ENCODE measurements at regions of chr2 and their contacts with region 1.

Region 1: GRCh38 chr2:234881413-234882241 is 70.2 kb upstream of the SH3BP4 start:
- DNase-seq: peak; percentile 88 to 92
- H3K4me3 ChIP-seq: peak overlapping the region; percentile 41; the same call in 1 of the 2 replicates
- H3K27ac ChIP-seq: peak overlapping the region; percentile 82
- H3K4me1 ChIP-seq: peaks cover 47% of the 10 kb centered on the region
- H3K27me3 ChIP-seq: no peaks in the 10 kb centered on the region
- CTCF ChIP-seq: peak; percentile 97

Region 2: DNA sequence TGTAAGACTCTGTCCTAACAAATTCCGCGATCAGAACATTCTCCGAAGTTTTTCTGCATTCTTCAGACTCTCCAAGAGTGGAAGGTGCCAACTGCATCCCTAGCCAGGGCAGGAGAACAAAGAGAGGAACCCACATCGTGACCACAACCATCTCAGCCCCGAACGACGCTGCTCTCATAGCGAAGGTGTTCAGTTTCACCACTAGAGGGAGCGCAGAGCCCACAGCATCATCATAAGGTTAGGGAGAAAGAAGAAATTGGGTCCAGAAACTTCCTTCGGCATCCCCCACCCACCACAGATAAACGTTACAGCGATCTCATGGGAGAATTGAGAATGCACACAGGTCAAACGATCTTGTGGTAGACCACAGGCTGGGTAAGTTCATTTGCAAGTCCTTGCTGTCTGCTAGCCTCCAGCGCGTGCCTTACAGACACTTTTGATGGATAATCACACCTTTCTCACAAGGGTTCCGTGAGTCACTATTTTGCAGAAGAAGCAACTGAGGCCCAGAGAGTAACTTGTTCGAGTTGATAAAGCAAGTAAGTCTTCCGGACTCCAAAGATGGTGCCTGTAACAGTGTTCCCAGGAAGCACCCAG is 331.0 kb before region 1 on chr2:
- CTCF ChIA-PET with region 1: interaction called, 4 read pairs
- POLR2A ChIA-PET with region 1: no interaction called
- intact Hi-C with region 1: loop called (anchors 1 kb)
- DNase-seq: peak; percentile 74 to 85
- H3K4me3 ChIP-seq: no peak overlapping the region
- H3K27ac ChIP-seq: no peak overlapping the region
- H3K4me1 ChIP-seq: peaks cover 11% of the 10 kb centered on the region
- H3K27me3 ChIP-seq: no peaks in the 10 kb centered on the region
- CTCF ChIP-seq: peak; percentile 99

Region 3: DNA sequence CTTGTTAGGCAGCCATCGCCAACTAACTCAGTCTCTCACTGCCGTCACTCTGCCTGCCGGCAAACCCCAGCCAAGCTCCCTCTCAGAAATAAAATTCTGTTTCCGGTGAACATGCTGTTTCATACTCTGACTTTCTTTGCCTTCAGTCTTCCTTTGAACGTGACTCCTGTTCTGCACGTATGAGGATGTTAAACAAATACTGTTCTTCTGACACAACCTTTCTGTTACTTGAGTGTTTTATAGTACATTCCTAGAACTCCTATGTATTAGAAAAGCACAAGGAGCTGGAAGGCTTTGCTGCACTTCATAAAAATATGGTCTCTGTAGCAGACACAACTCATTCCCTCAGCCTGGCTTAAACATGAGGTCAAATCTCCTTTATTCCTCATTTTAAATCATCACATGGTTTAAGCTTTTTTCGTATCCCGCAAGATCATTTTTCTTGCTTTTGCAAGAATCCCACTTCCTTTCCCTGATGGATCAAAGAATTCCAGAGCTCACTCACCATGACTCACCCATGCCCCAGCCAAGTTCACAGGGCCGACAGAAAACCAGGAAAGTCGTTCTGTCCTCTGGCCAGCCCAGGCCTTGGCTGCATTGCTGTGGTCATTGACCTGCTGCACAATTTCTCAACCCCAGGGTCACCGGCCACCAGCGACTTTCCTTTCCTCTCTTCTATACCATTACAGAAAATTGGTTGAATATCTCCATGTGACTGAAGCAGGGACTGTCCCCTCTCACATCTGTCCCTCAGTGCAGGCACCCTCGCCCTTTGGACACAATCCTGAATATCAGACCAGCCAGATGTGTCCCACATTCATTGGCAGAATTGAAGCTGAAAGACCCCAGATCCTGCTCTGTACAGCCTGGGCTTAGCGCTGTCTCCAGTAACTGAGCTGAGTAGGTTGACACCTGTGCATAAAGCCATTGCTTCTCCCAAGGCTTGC is 201.6 kb before region 1 on chr2:
- CTCF ChIA-PET with region 1: no interaction called
- POLR2A ChIA-PET with region 1: no interaction called
- intact Hi-C with region 1: loop called (anchors 5 kb)
- DNase-seq: peak; percentile 86 to 96
- H3K4me3 ChIP-seq: no peak overlapping the region
- H3K27ac ChIP-seq: peak overlapping the region; percentile 90
- H3K4me1 ChIP-seq: peaks cover 75% of the 10 kb centered on the region
- H3K27me3 ChIP-seq: no peaks in the 10 kb centered on the region
- CTCF ChIP-seq: no peak

Region 4: DNA sequence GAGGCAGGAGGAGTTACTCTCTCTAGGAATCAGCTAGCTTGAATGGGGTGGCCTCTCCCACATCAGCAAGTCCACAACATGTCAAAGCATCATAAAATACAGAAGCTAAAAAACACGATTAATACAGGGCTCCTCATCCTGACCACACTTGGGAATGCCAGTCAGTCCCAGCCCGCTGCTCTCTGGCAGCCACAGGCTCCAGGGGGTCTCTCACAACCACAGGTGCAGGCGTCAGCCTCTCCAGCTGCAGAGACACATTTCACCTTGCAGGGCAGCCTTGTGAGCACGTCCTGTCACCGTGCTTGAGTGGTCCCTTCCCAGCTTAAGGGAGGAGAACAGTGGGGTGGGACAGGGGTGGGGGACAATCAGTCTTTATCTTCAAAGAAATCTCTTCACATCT is 67.3 kb before region 1 on chr2:
- CTCF ChIA-PET with region 1: no interaction called
- POLR2A ChIA-PET with region 1: no interaction called
- intact Hi-C with region 1: no loop called
- DNase-seq: peak in 1 of 2 experiments; percentile 26
- H3K4me3 ChIP-seq: no peak overlapping the region
- H3K27ac ChIP-seq: no peak overlapping the region
- H3K4me1 ChIP-seq: no peaks in the 10 kb centered on the region
- H3K27me3 ChIP-seq: no peaks in the 10 kb centered on the region
- CTCF ChIP-seq: no peak

Region 5: DNA sequence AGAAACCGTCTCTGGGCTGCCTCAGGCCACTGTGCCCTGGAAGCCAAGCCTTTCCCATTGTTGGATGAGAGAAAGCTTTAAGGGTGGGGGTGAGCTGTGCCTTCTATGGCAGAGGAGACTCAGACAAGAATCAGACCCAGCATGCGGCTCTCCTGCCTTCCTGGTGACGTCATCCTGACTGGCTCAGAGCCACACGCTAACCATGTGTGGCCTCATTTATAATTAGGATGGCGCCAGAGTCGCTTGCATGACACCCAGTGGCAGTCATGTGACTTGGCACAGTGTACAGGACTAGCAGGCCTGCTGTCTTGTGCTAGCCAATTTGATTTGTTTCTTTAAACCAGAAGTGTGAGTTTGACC is 169.3 kb after region 1 on chr2:
- CTCF ChIA-PET with region 1: interaction called, 3 read pairs
- POLR2A ChIA-PET with region 1: no interaction called
- intact Hi-C with region 1: loop called (anchors 2 kb)
- DNase-seq: peak; percentile 89 to 97
- H3K4me3 ChIP-seq: no peak overlapping the region
- H3K27ac ChIP-seq: peak overlapping the region; percentile 74
- H3K4me1 ChIP-seq: peaks cover 57% of the 10 kb centered on the region
- H3K27me3 ChIP-seq: no peaks in the 10 kb centered on the region
- CTCF ChIP-seq: no peak; the same call in 1 of the 2 replicates

Region 6: GRCh38 chr2:235263205-235264122 is 381.8 kb after region 1 on chr2:
- CTCF ChIA-PET with region 1: no interaction called
- POLR2A ChIA-PET with region 1: no interaction called
- intact Hi-C with region 1: no loop called
- DNase-seq: peak; percentile 67 to 73
- H3K4me3 ChIP-seq: peak overlapping the region; percentile 20; the same call in 1 of the 2 replicates
- H3K27ac ChIP-seq: no peak overlapping the region
- H3K4me1 ChIP-seq: peaks cover 23% of the 10 kb centered on the region
- H3K27me3 ChIP-seq: no peaks in the 10 kb centered on the region
- CTCF ChIP-seq: no peak